Caco-2 (cell line): ENCODE measurements at regions of chr7 and their contacts with region 1.

Region 1: DNA sequence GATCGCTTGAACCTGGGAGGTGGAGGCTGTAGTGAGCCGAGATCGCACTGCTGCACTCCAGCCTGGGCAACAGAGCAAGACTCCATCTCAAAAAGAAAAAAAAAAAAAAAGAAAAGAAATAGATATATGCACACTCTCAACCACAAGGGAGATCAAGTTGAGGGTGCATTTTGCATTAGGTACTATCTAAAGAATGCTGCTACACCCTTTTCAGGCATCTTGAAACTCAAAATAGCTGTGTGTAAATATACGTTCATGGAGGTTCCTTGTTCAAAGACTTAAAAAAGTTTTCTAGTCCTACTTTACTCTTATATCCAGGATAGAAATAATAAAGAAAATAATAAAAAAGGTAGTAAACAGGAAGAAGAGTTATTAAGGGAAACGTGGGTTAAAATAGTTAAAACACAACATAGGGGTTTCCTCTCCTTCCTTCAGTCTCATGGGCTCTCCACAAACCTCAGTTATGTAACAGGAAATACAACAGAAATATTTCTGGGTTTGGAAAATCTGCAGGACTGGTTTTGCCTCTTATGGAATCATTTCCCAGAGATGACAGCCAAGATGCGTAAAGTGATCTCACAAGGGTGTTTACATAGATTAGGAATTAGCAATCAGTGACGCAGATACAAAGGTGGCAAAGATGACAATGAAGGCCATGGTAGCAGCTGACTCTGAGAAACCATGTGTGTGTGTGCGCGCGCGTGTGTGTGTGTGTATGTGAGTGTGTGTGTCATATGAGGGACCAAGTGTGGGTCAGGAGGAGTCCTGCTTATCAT is 15.1 kb downstream of the STEAP4 start:
- DNase-seq: peak; percentile 37 to 46
- H3K4me3 ChIP-seq: no peak overlapping the region
- H3K4me3 Mint-ChIP-seq: no peak overlapping the region
- H3K27ac Mint-ChIP-seq: peak overlapping the region; percentile 57
- H3K4me1 ChIP-seq: peaks cover 16% of the 10 kb centered on the region
- H3K4me1 Mint-ChIP-seq: no peaks in the 10 kb centered on the region
- H3K27me3 ChIP-seq: no peaks in the 10 kb centered on the region
- H3K27me3 Mint-ChIP-seq: no peaks in the 10 kb centered on the region
- CTCF ChIP-seq: no peak

Region 2: DNA sequence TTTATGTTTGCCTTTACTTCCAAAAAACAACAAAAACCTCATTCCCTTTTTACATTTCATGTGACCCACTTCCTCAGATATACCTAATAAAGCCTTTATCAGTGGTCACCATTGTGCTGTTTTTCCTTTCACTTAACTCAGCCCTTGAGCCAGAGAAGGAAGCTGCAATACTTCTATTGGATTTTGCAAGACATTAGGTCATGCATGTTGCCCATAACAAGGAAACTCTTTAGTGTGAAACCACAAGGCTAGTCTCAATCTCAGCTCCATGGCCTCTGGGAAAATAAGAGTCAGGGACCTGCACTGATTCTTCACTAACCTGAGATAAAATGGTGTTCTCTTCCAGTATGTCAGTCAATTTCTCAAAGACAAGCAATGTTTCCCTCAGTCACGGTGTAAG is 12.7 kb before region 1 on chr7:
- CTCF ChIA-PET with region 1: no interaction called
- POLR2A ChIA-PET with region 1: no interaction called
- intact Hi-C with region 1: no loop called
- DNase-seq: no peak
- H3K4me3 ChIP-seq: no peak overlapping the region
- H3K4me3 Mint-ChIP-seq: no peak overlapping the region
- H3K27ac Mint-ChIP-seq: no peak overlapping the region
- H3K4me1 ChIP-seq: no peaks in the 10 kb centered on the region
- H3K4me1 Mint-ChIP-seq: no peaks in the 10 kb centered on the region
- H3K27me3 ChIP-seq: no peaks in the 10 kb centered on the region; the same call in 1 of the 2 replicates
- H3K27me3 Mint-ChIP-seq: no peaks in the 10 kb centered on the region
- CTCF ChIP-seq: no peak

Region 3: DNA sequence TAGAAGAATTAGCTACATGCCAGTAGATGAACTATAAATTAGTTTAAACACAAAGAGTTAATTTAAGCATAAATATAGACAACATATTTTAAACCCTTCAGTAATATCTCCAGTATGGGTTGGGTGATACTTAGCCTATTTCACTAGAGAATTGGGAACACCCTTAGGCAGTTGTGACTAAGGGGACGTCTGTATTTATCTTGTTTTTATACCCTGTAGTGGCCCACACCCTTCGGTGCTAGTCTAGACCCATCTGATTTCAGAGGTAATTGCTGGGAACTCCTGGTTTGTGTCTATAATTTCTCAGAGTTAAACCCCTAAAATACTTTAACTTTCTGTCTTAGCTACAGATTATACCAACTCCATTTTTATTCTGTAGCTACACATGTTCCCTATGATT is 26.6 kb after region 1 on chr7:
- CTCF ChIA-PET with region 1: no interaction called
- POLR2A ChIA-PET with region 1: no interaction called
- intact Hi-C with region 1: loop called (anchors 2 kb)
- DNase-seq: no peak
- H3K4me3 ChIP-seq: no peak overlapping the region
- H3K4me3 Mint-ChIP-seq: no peak overlapping the region
- H3K27ac Mint-ChIP-seq: no peak overlapping the region
- H3K4me1 ChIP-seq: 0 out of 2 replicates have a peak, but pooled peaks cover 6% of the 10 kb centered on the region
- H3K4me1 Mint-ChIP-seq: no peaks in the 10 kb centered on the region
- H3K27me3 ChIP-seq: no peaks in the 10 kb centered on the region
- H3K27me3 Mint-ChIP-seq: peaks cover 2% of the 10 kb centered on the region
- CTCF ChIP-seq: no peak